ENCODE measurements at regions of chr1 and their contacts with region 1.

Region 1: DNA sequence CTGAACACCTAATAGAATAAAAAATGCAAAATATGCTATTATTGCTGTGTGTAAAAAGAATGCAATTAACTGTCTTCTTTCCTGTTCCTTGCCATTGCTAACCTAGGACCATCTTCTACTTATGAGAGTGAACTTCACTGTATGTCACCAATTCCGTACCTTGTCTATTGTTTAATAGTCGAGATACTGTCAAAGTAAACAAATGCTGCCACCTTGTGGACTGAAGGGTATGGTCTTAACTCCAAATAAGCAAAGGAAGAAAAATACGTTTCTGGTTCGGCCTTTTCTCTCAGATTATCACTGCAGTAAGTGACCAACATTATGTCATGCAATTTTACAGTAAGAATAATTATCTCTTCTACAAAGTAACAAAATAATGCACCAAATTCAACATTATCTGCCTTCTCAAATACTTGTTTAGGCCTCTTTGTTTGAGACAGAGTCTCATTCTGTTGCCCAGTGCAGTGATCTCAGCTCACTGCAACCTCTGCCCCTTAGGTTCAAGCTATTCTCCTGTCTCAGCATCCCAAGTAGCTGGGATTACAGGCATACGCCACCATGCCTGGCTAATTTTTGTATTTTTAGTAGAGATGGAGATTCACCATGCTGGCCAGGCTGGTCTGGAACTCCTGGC is 133.4 kb downstream of the COP1 start:
- DNase-seq: no peak
- H3K4me3 ChIP-seq: no peak overlapping the region
- H3K27ac ChIP-seq: no peak overlapping the region
- H3K4me1 ChIP-seq: no peaks in the 10 kb centered on the region
- H3K27me3 ChIP-seq: no peaks in the 10 kb centered on the region
- CTCF ChIP-seq: peak; percentile 49 to 77 (median 69)

Region 2: GRCh38 chr1:175373786-175374623 is 699.6 kb before region 1 on chr1:
- intact Hi-C with region 1: loop called (anchors 1 kb)
- DNase-seq: no peak
- H3K4me3 ChIP-seq: no peak overlapping the region
- H3K27ac ChIP-seq: no peak overlapping the region
- H3K4me1 ChIP-seq: no peaks in the 10 kb centered on the region
- H3K27me3 ChIP-seq: no peaks in the 10 kb centered on the region
- CTCF ChIP-seq: peak; percentile 57 to 82 (median 72)

Region 3: DNA sequence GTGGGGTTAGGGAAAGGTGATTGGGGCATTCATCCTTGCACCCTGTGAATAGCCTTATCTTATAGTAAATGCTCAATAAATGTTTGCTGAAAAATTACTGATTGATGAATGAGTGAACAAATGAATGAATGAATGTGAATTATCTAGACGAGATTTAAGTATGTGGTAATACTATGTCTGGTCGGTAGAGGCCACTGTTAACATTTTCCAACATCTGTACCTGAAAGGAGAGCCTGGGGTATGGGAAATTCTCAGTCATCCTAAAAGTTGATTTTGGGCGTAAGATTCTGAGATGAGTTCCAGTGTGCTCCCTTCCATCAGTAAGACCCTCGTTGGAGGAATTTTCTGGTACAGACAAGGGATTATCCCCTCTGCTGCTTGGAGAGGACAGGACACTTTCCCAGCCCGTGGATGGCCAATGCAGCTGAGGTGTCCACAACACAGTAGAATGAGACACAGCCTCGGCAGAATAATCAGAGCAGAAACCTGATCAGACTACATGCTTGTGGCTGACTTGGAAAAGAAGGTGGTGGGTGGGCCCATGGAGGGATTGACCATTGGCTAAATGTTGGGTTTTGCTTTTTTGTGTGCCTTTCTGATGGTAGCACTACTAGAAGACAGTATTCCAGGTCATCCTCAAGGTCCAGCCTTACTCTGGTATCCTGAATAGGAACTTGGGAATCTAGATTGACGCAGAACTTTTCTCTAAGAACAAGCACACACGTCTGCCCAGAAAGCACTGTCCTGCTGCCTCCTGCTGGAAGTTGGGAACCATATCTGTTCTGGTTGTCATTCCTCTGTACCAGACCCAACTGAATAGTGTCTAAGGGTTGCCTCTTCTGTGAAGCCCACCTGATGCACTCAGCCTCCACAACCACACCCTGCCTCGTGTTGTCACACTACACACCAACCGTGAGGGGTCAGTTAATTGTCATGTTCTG is 592.2 kb before region 1 on chr1:
- intact Hi-C with region 1: loop called (anchors 2 kb)
- DNase-seq: no peak
- H3K4me3 ChIP-seq: no peak overlapping the region
- H3K27ac ChIP-seq: no peak overlapping the region
- H3K4me1 ChIP-seq: no peaks in the 10 kb centered on the region
- H3K27me3 ChIP-seq: no peaks in the 10 kb centered on the region
- CTCF ChIP-seq: peak; percentile 58 to 70 (median 60)

Measured in ascending aorta (tissue), 2 donors.